HepG2 (cell line): ENCODE measurements at regions of chr22 and their contacts with region 1.

Region 1: DNA sequence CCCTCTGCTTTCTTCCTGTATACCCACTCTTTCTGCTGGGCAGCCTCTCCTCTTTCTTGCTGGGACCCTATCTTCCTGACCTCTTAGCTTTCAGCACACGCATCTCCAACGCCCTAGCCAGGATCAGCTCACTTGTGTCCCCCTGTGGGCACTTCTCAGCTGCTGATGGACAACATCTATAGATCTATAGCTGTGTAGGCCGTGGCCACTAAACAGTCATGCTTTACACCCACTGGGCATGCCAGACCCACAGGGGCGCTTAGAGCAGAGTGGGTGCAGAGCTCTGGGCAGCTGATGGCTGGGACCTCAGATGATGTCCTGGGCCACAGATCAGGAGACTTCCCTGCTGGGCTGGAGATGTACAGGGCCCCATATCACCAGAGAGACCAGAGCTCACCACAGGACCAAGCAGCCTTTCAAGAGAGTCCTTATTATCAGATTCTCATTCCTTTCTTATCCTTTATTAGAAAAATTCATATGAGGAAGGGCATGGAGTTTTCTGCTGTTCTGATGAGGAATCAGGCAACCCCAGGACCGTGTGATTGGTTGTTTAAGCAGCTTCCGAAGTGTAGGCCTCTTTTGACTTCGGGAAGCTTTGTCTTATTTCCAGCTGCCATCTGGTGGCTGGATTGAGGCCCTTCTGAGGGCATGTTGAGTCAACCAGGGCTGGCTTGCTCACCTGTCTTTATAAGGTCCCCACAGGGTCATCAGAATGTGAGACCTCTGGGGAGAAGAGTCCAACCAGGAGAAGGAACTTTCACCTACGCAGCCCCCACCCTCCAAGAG is 60.5 kb downstream of the OSBP2 start:
- DNase-seq: peak; percentile 54
- ATAC-seq: peak; percentile 88
- H3K4me3 ChIP-seq: no peak overlapping the region
- H3K27ac ChIP-seq: no peak overlapping the region
- H3K4me1 ChIP-seq: no peaks in the 10 kb centered on the region
- H3K27me3 ChIP-seq: no peaks in the 10 kb centered on the region
- CTCF ChIP-seq: peak; percentile 81
- EP300 ChIP-seq: no peak
- POLR2A ChIP-seq: no peak
- RAD21 ChIP-seq: peak; percentile 76

Region 2: DNA sequence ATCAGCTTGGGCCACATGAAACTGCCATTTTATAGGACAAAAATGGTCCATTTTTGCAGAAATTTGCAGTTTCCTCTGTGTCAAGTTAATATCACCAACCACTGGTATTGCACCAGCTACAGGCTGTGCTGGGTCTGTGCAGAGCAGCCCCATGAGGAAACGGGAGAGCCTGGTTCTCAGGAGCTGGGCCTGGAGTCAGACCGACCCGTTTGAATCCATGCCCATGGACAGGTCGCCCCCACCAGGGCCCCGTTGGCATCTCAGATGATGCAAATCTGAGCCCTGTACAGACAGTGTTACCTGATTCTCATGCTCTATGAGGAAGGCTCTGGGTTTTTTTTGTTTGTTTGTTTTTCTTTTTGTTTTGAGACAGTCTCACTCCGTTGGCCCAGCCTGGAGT is 198.8 kb before region 1 on chr22:
- CTCF ChIA-PET with region 1: no interaction called
- POLR2A ChIA-PET with region 1: no interaction called
- in situ Hi-C with region 1: no loop called
- intact Hi-C with region 1: loop called (anchors 5 kb)
- DNase-seq: no peak
- ATAC-seq: peak; percentile 41; the same call in 2 of the 3 replicates
- H3K4me3 ChIP-seq: no peak overlapping the region
- H3K27ac ChIP-seq: no peak overlapping the region
- H3K4me1 ChIP-seq: peaks cover 21% of the 10 kb centered on the region
- H3K27me3 ChIP-seq: no peaks in the 10 kb centered on the region
- CTCF ChIP-seq: peak; percentile 49
- EP300 ChIP-seq: no peak
- POLR2A ChIP-seq: no peak
- RAD21 ChIP-seq: no peak

Region 3: GRCh38 chr22:30634471-30635233 is 120.5 kb before region 1 on chr22:
- CTCF ChIA-PET with region 1: interaction called, 61 read pairs
- POLR2A ChIA-PET with region 1: interaction called, 8 read pairs
- in situ Hi-C with region 1: loop called (anchors 5 kb)
- intact Hi-C with region 1: loop called (anchors 1 kb)
- DNase-seq: peak; percentile 31
- ATAC-seq: peak; percentile 71
- H3K4me3 ChIP-seq: no peak overlapping the region
- H3K27ac ChIP-seq: no peak overlapping the region
- H3K4me1 ChIP-seq: peaks cover 10% of the 10 kb centered on the region
- H3K27me3 ChIP-seq: peaks cover 0 to 2% of the 10 kb centered on the region in 2 experiments; a peak in 3 of 5 replicates
- CTCF ChIP-seq: peak; percentile 88
- EP300 ChIP-seq: no peak
- POLR2A ChIP-seq: no peak
- RAD21 ChIP-seq: peak; percentile 67